HepG2 (cell line): ENCODE measurements at regions of chr15 and their contacts with region 1.

Region 1: GRCh38 chr15:89893696-89894455 is at the start of gene AP3S2:
- DNase-seq: peak; percentile 87
- ATAC-seq: peak; percentile 93
- H3K4me3 ChIP-seq: peak within 1 kb of the TSS; percentile 81 to 89 (median 89)
- H3K27ac ChIP-seq: peak within 1 kb of the TSS; percentile 88
- H3K4me1 ChIP-seq: peaks cover 24% of the 10 kb centered on the region
- H3K27me3 ChIP-seq: no peaks in the 10 kb centered on the region; a peak in 1 of 5 replicates
- CTCF ChIP-seq: no peak; the same call in none of the 2 replicates
- EP300 ChIP-seq: 0 out of 4 replicates have a peak, but pooled peaks of 1 of the 2 experiments have one; percentile 36
- POLR2A ChIP-seq: peak; percentile 78 to 93
- RAD21 ChIP-seq: 0 out of 2 replicates have a peak, but pooled peaks have one; percentile 33
- total RNA-seq, gene AP3S2: 44.4 and 69.5 TPM in 2 replicates

Region 2: GRCh38 chr15:89912674-89913396 is 19.0 kb after region 1 on chr15 and contains the start of gene ARPIN:
- CTCF ChIA-PET with region 1: no interaction called
- POLR2A ChIA-PET with region 1: interaction called, 14 read pairs
- in situ Hi-C with region 1: no loop called
- intact Hi-C with region 1: no loop called
- DNase-seq: peak; percentile 16
- ATAC-seq: peak; percentile 84
- H3K4me3 ChIP-seq: peak within 1 kb of the TSS; percentile 80 to 86 (median 84)
- H3K27ac ChIP-seq: peak within 1 kb of the TSS; percentile 58
- H3K4me1 ChIP-seq: peaks cover 24% of the 10 kb centered on the region
- H3K27me3 ChIP-seq: no peaks in the 10 kb centered on the region
- CTCF ChIP-seq: no peak
- EP300 ChIP-seq: no peak
- POLR2A ChIP-seq: peak in 1 of 2 experiments; percentile 46; a peak in 3 of 4 replicates
- RAD21 ChIP-seq: no peak
- total RNA-seq, gene ARPIN: 5.0 and 5.3 TPM in 2 replicates

Region 3: DNA sequence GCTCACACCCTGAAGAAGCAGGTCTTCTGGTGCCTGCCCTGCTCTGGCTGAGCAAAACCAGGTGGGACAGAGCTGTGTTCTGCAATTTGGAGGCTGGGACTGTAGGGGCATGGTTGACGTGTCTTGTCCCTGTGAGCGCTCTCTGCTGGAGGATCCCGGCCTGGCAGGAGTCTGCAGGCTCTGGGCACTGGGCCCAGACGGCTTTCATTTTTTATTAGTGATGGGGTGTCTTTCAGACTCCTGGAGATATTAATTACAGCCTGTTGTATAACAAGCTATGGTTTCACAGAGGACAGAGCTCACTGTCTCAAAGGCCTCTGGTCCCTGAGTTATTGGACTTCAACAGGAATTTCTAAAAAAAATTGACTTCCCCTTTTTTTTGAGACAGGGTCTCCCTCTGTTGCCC is 77.7 kb after region 1 on chr15:
- CTCF ChIA-PET with region 1: interaction called, 19 read pairs
- POLR2A ChIA-PET with region 1: no interaction called
- in situ Hi-C with region 1: no loop called
- intact Hi-C with region 1: loop called (anchors 1 kb)
- DNase-seq: peak; percentile 62
- ATAC-seq: peak; percentile 100
- H3K4me3 ChIP-seq: no peak overlapping the region
- H3K27ac ChIP-seq: no peak overlapping the region
- H3K4me1 ChIP-seq: no peaks in the 10 kb centered on the region; the same call in none of the 2 replicates
- H3K27me3 ChIP-seq: no peaks in the 10 kb centered on the region
- CTCF ChIP-seq: peak; percentile 75
- EP300 ChIP-seq: no peak
- POLR2A ChIP-seq: no peak
- RAD21 ChIP-seq: peak; percentile 75; the same call in 1 of the 2 replicates

Region 4: DNA sequence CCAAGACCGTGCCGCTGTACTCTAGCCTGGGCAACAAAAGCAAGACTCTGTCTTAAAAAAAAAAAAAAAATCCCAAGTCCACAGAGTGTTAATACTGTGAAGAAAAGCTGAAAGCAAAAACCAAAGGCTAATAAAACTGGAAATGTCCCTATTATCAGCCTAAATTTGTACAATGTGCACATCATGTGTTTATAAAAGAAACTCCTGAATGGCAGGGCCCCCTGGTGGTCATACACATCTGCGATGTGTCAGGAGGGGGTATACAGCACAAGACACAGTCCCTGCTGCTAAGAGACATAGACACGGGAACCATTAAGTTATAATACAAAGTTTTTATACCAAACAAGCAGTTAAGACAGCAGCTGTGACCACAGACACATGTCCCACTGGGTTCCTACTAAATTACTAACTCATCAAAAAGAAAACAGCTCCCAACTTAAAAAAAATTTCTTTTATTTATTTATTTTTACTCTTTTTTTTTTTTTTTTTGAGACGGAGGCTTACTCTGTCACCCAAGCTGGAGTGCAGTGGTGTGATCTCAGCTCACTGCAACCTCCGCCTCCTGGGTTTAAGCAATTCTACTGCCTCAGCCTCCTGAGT is 177.4 kb after region 1 on chr15:
- CTCF ChIA-PET with region 1: interaction called, 9 read pairs
- POLR2A ChIA-PET with region 1: no interaction called
- in situ Hi-C with region 1: no loop called
- intact Hi-C with region 1: loop called (anchors 1 kb)
- DNase-seq: peak; percentile 71
- ATAC-seq: peak; percentile 67
- H3K4me3 ChIP-seq: no peak overlapping the region
- H3K27ac ChIP-seq: no peak overlapping the region
- H3K4me1 ChIP-seq: peaks cover 22% of the 10 kb centered on the region
- H3K27me3 ChIP-seq: no peaks in the 10 kb centered on the region
- CTCF ChIP-seq: peak; percentile 74
- EP300 ChIP-seq: no peak
- POLR2A ChIP-seq: no peak
- RAD21 ChIP-seq: peak; percentile 75

Region 5: DNA sequence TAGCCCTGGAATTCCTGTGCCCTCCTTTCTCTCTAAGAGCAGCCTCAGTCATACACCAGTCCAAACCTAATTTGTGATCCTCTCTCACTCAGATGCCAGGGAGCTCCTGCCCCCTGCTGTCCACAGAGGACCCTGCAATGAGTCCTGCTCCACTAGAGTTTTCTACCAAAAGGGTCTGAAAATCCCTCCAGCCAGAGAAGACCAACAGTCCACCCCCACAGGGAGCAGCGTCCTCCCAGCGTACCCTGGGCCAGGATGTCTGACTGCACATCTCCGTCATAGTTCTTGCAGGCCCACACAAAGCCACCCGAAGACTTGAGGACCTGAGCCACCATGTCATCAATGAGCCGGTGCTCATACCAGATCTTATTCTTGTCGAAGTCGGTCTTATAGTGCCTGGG is 193.0 kb after region 1 on chr15:
- CTCF ChIA-PET with region 1: interaction called, 32 read pairs
- POLR2A ChIA-PET with region 1: no interaction called
- in situ Hi-C with region 1: loop called (anchors 5 kb)
- intact Hi-C with region 1: loop called (anchors 1 kb)
- DNase-seq: peak; percentile 44
- ATAC-seq: peak; percentile 68
- H3K4me3 ChIP-seq: no peak overlapping the region
- H3K27ac ChIP-seq: no peak overlapping the region
- H3K4me1 ChIP-seq: no peaks in the 10 kb centered on the region
- H3K27me3 ChIP-seq: no peaks in the 10 kb centered on the region
- CTCF ChIP-seq: peak; percentile 81
- EP300 ChIP-seq: no peak
- POLR2A ChIP-seq: no peak
- RAD21 ChIP-seq: peak; percentile 79